CD8-positive, alpha-beta T cell (primary cell): ENCODE measurements at regions of chr7 and their contacts with region 1.

Region 1: DNA sequence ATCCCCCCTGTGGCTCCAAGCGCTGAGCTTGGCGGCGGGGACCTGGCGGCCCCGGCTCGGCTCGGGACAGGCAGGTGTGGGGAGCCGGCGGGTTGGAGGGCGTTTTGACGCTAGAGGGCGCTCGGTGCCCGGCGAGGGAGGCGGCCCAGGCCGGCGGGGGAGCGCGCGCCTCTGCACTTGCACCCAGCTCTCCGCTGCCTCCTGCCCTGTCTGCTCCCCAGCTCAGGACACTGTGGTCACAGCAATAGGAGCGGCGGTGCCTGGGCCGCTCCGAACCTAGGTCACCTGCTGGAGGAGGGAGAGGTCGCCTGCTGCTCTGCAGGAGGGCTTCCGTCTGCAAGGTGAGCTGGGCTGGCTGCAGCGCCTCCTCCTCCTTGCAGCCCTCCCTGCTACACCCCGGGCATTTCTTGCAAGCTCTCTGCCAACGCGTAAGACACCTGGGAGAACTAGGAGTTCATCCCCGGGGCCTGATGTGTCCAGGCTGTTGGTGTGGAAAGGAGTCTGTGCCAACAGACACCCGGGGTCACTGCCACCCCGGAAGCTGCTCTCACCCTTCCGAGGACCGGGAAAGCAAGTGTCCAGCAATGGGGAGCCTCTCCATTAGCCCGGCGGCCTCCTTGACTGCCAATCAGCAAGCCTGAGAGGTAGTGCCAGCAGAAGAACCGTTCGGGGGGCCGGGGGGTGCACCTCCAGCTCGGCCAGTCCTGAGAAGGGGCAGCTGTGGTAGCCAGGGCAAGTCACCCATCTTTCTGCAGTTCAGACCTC is 620.4 kb downstream of the GALNT17 start:
- DNase-seq: peak in 2 of 9 experiments; percentile 6 to 7
- ATAC-seq: no peak
- H3K4me3 ChIP-seq: no peak overlapping the region
- H3K4me3 Mint-ChIP-seq: no peak overlapping the region
- H3K27ac ChIP-seq: no peak overlapping the region
- H3K27ac Mint-ChIP-seq: no peak overlapping the region
- H3K4me1 ChIP-seq: no peaks in the 10 kb centered on the region
- H3K4me1 Mint-ChIP-seq: no peaks in the 10 kb centered on the region
- H3K27me3 ChIP-seq: no peaks in the 10 kb centered on the region
- H3K27me3 Mint-ChIP-seq: peaks cover 21% of the 10 kb centered on the region
- CTCF ChIP-seq: no peak

Region 2: DNA sequence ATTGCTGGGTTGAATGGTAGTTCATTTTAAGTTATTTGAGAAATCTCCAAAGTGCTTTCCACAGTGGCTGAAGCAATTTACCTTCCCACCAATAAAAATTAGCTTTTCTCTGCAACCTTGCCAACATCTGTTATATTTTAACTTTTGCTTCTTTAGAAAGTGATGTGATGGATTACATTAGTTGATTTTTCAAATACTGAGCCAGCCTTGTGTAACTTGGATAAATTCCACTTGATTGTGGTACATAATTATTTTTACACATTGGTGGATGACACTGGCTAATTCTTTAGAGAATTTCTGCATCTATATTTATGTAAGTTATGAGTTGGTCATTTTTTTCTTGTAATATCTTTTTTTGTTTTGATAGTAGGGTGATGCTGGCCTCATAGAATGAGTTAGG is 13.7 kb after region 1 on chr7:
- CTCF ChIA-PET with region 1: no interaction called
- POLR2A ChIA-PET with region 1: no interaction called
- intact Hi-C with region 1: no loop called
- DNase-seq: no peak
- ATAC-seq: no peak
- H3K4me3 ChIP-seq: no peak overlapping the region
- H3K4me3 Mint-ChIP-seq: no peak overlapping the region
- H3K27ac ChIP-seq: no peak overlapping the region
- H3K27ac Mint-ChIP-seq: no peak overlapping the region
- H3K4me1 ChIP-seq: no peaks in the 10 kb centered on the region
- H3K4me1 Mint-ChIP-seq: no peaks in the 10 kb centered on the region
- H3K27me3 ChIP-seq: no peaks in the 10 kb centered on the region
- H3K27me3 Mint-ChIP-seq: no peaks in the 10 kb centered on the region
- CTCF ChIP-seq: no peak

Region 3: DNA sequence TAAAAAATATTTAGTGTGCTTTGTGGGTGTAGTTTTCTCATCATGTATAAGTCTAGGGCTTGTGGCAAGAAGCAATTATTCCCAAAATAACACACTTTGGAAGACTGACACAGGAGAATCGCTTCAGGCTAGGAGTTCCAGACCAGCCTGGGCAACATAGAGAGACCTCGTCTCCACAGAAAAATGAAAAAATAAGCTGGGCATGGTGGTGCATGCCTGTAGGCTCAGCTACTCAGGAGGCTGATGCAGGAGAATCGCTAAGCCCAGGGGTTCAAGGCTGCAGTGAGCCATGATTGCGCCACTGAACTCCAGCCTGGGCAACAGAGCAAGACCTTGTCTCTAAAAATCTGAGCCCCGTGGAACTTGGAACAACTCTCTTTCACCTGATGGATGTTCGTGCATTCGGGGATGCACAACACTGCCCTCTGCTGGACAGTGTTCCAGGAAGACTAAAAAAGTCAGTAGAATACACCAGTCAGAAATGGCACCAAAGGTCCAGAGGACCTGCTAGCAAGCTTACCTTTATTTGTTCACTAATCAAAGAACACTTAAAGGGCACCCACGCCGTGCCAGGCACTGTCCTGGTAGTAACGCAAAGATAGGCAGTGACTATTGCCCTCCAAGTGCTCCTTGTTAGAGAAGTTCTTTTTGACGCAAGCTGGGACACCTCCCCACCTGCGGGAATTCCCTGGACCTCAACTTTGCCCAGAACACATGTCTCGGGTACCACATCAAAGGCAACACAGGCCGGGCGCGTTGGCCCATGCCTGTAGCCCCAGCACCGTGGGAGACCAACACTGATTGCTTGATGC is 741.7 kb after region 1 on chr7:
- CTCF ChIA-PET with region 1: no interaction called
- POLR2A ChIA-PET with region 1: no interaction called
- intact Hi-C with region 1: loop called in 1 of 2 experiments (anchors 10 kb)
- DNase-seq: peak in 8 of 9 experiments; percentile 18 to 57 (median 46)
- ATAC-seq: no peak
- H3K4me3 ChIP-seq: no peak overlapping the region
- H3K4me3 Mint-ChIP-seq: no peak overlapping the region
- H3K27ac ChIP-seq: no peak overlapping the region
- H3K27ac Mint-ChIP-seq: no peak overlapping the region
- H3K4me1 ChIP-seq: no peaks in the 10 kb centered on the region
- H3K4me1 Mint-ChIP-seq: no peaks in the 10 kb centered on the region
- H3K27me3 ChIP-seq: no peaks in the 10 kb centered on the region
- H3K27me3 Mint-ChIP-seq: no peaks in the 10 kb centered on the region
- CTCF ChIP-seq: peak; percentile 74